AG04449 (cell line): ENCODE measurements at regions of chr3 and their contacts with region 1.

Region 1: DNA sequence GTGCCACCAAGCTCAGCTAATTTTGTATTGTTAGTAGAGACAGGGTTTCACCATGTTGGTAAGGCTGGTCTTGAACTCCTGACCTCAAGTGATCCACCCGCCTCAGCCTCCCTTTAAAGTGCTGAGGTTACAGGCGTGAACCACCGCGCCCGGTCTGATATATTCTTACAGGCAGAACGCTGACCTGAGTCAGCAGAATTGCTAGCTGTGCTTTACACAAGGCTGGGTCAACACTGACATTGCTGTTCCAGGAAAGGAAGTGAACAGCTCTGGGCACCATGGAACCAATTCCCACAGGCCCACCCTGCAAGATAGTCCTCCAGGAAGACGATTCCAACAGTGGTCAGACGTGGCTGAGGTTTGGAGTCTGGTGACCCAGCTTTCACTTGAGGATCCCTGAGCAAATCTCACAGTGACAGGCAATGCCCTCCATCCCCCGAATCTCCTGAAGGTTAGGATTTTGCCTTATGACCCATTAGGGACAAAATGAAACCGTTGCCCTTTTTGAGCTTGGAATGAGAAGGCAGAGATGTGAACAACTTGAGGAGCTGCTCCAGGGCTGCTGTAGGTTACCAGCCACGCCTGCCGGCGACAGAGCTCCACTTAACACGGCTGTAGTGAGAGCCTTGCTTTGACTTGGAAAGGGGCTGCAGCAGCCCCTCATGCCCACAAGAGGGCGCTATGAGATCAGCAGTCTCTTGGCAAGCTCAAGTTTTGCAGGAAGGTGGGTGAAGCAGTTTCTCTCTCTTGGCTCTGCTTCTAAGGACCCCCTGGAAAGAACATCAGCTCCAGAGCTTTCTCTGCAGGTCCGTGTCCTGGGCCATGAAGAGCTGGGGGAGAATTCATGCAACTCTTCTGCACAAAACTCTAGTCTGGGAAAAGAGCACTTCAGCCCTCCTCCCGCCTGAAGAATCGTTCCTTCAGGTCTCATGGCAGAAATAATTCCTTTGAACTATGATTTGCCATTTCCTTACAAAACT is 74.1 kb downstream of the SENP2 start:
- DNase-seq: peak; percentile 44
- H3K4me3 ChIP-seq: no peak overlapping the region
- CTCF ChIP-seq: peak; percentile 95

Region 2: DNA sequence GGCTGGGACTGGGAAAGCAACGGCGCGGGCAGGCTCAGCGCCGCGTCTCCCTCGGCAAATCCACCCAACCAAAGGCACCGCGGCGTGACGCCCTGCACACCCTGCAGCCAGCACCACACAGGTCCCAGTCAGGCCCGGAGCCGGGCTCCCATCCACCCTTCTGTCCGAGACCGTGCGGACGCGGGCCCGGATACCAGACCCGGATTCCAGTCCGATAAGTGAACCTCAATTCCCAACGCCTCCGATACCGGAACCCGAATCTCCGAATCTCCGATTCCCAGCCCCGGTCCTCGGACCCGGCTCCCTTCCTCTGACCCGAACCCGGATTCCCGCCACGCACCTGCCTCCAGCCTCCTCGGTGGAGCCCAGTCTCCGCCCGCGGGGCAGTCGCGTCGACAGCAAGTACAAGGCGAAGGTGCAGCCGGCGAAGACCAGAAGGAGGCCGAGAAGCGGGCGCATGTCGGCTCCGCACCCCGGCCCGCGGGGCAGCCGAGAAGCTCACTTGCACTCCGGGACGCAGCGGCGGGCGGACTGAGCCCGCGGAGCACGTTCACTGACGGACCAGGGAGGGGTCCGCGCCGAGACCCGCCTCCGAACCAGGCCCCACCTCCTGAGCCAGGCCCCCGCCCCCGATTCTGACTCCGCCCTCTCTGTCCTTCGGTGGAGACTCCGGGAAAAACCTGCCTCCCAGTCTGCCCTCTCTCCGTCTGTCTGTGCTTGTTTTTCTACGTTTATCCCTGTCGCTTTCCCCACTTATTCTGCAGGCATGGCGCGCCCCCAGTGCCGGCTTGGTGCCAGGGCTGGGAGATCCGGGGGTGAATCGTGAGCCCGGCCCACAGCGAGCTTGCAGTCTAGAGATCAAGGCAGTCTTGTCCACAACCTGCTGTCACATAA is 161.5 kb before region 1 on chr3 and contains the start of gene TMEM41A:
- CTCF ChIA-PET with region 1: no interaction called
- POLR2A ChIA-PET with region 1: no interaction called
- DNase-seq: peak; percentile 29
- H3K4me3 ChIP-seq: peak within 1 kb of the TSS; percentile 92
- CTCF ChIP-seq: no peak

Region 3: DNA sequence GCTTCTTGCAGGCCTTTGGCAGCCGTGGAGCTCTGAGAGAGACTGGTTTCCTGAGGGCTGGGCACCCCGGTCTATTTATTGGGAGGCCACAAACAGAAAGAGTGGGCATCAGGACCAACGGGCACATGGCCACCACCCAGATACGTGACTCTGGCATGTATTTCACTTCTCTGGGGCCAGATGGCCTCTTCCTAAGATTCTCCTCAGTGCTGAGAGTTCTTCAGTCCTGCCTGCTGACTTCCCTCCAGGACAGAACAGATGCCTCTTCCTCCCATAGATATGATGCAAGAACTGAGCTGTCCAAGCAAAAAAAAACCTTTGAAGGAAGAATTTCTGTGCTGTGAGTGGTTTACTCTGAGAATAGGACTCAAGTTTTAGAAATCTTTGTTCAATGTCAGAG is 56.9 kb after region 1 on chr3:
- CTCF ChIA-PET with region 1: interaction called, 23 read pairs
- POLR2A ChIA-PET with region 1: no interaction called
- DNase-seq: peak; percentile 63
- H3K4me3 ChIP-seq: no peak overlapping the region
- CTCF ChIP-seq: no peak

Region 4: DNA sequence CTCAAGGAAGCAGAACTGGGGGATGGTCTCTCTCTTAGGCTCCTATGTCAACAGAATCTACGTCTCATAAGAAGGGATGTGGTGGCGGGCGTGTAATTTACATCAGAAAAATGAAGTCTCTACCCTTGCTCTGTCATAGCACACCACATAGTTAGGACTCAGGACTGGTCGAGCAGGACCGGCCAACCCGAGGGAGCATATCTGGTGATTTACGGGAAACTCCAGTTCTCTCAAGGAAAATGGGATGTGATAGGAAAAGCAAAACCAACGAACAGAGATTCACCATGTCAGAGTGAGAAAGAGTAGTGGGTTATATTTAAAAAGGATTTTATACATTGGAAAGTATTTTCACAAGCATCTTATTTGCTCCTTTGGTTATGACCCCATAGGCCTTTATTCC is 109.9 kb after region 1 on chr3:
- CTCF ChIA-PET with region 1: interaction called, 68 read pairs
- POLR2A ChIA-PET with region 1: no interaction called
- DNase-seq: no peak
- H3K4me3 ChIP-seq: no peak overlapping the region
- CTCF ChIP-seq: no peak

Region 5: GRCh38 chr3:185824476-185825378 is 164.5 kb after region 1 on chr3 and contains the start of gene IGF2BP2:
- CTCF ChIA-PET with region 1: interaction called, 35 read pairs
- POLR2A ChIA-PET with region 1: interaction called, 4 read pairs
- DNase-seq: no peak
- H3K4me3 ChIP-seq: peak within 1 kb of the TSS; percentile 92
- CTCF ChIP-seq: peak; percentile 33

Region 6: GRCh38 chr3:185924375-185924774 is 264.1 kb after region 1 on chr3:
- CTCF ChIA-PET with region 1: interaction called, 36 read pairs
- POLR2A ChIA-PET with region 1: no interaction called
- DNase-seq: no peak
- H3K4me3 ChIP-seq: no peak overlapping the region
- CTCF ChIP-seq: no peak

Region 7: DNA sequence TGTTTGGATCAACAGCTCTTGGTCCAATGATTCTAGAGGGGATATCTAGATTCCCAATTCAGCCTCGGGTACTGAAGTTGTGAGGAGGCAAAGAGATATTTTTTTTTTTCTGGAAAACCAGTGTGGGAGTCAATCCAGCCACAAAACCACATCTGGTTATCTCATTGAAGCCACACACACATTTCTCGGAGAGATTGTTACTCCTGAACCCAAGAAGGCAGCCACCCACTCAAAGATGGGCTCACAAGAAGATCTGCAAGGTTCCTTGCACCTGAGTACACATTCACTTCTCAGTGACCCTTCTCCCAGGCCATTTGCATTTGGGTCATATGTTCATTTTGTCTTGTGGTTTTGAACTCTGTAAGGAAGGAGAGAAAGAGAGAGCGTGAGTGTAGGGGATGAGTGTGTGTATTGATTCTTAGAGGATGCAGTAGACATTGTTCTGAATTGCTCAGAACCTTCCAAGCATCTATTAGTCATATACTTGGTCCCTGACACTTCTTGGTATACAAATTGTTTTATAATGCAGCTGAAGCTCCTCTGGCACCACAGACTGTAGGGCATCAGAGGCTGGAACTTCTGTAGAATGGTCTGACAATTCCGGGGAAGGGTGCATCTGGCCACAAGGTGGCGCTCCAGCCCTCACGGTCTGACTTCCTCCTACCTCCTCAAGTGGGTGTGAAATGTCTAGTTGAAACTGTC is 316.9 kb after region 1 on chr3:
- CTCF ChIA-PET with region 1: interaction called, 28 read pairs
- POLR2A ChIA-PET with region 1: no interaction called
- DNase-seq: no peak
- H3K4me3 ChIP-seq: no peak overlapping the region
- CTCF ChIP-seq: peak; percentile 96